A549 (cell line): ENCODE measurements at regions of chr18 and their contacts with region 1.

Region 1: GRCh38 chr18:45991788-45992187 is 24.7 kb upstream of the EPG5 start:
- DNase-seq: no peak
- ATAC-seq: no peak
- H3K4me3 ChIP-seq: no peak overlapping the region
- H3K27ac ChIP-seq: no peak overlapping the region
- H3K4me1 ChIP-seq: no peaks in the 10 kb centered on the region
- CTCF ChIP-seq: no peak
- EP300 ChIP-seq: no peak
- POLR2A ChIP-seq: no peak
- RAD21 ChIP-seq: no peak

Region 2: GRCh38 chr18:45962461-45962860 is 29.3 kb before region 1 on chr18:
- CTCF ChIA-PET with region 1: no interaction called
- POLR2A ChIA-PET with region 1: no interaction called
- DNase-seq: no peak
- ATAC-seq: no peak
- H3K4me3 ChIP-seq: no peak overlapping the region
- H3K27ac ChIP-seq: no peak overlapping the region
- H3K4me1 ChIP-seq: no peaks in the 10 kb centered on the region
- CTCF ChIP-seq: no peak
- EP300 ChIP-seq: no peak
- POLR2A ChIP-seq: no peak
- RAD21 ChIP-seq: no peak

Region 3: DNA sequence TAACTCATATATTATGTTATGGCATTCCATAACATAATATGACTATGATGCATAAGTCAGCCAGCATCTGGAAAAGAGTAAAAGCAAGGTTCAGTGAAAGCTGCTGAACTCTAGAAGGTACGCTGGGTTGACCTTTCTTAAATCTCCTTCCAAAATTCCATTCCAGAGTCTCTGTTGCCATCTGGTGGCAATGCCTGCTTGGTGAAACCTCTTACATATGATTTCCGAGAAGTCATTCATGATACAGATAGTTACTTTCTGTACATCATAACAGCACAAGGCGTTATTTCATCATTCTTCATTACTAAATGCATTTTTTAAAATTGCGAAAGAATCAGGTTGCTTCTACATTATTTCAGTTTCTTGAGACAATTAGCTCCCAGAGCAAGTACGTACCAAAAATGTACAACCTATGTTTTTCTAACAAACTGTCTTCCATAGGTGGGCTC is 17.7 kb before region 1 on chr18:
- CTCF ChIA-PET with region 1: interaction called, 11 read pairs
- POLR2A ChIA-PET with region 1: no interaction called
- DNase-seq: peak; percentile 21 to 74
- ATAC-seq: peak; percentile 85 to 94
- H3K4me3 ChIP-seq: peak overlapping the region; percentile 38
- H3K27ac ChIP-seq: peak overlapping the region in 1 of 2 experiments; percentile 37; a peak in 4 of 6 replicates
- H3K4me1 ChIP-seq: no peaks in the 10 kb centered on the region
- CTCF ChIP-seq: peak; percentile 79
- EP300 ChIP-seq: no peak
- POLR2A ChIP-seq: no peak
- RAD21 ChIP-seq: peak; percentile 79 to 89

Region 4: GRCh38 chr18:46001892-46002291 is 10.1 kb after region 1 on chr18:
- CTCF ChIA-PET with region 1: no interaction called
- POLR2A ChIA-PET with region 1: no interaction called
- DNase-seq: no peak
- ATAC-seq: no peak
- H3K4me3 ChIP-seq: no peak overlapping the region
- H3K27ac ChIP-seq: no peak overlapping the region
- H3K4me1 ChIP-seq: no peaks in the 10 kb centered on the region
- CTCF ChIP-seq: no peak
- EP300 ChIP-seq: no peak
- POLR2A ChIP-seq: no peak
- RAD21 ChIP-seq: no peak